ENCODE measurements at regions of chr19 and their contacts with region 1.

Region 1: GRCh38 chr19:1672038-1672768 is 19.8 kb upstream of the TCF3 start:
- DNase-seq: no peak
- H3K4me3 ChIP-seq: peak overlapping the region; percentile 36
- H3K27me3 ChIP-seq: peaks cover 24% of the 10 kb centered on the region
- CTCF ChIP-seq: peak; percentile 84

Region 2: DNA sequence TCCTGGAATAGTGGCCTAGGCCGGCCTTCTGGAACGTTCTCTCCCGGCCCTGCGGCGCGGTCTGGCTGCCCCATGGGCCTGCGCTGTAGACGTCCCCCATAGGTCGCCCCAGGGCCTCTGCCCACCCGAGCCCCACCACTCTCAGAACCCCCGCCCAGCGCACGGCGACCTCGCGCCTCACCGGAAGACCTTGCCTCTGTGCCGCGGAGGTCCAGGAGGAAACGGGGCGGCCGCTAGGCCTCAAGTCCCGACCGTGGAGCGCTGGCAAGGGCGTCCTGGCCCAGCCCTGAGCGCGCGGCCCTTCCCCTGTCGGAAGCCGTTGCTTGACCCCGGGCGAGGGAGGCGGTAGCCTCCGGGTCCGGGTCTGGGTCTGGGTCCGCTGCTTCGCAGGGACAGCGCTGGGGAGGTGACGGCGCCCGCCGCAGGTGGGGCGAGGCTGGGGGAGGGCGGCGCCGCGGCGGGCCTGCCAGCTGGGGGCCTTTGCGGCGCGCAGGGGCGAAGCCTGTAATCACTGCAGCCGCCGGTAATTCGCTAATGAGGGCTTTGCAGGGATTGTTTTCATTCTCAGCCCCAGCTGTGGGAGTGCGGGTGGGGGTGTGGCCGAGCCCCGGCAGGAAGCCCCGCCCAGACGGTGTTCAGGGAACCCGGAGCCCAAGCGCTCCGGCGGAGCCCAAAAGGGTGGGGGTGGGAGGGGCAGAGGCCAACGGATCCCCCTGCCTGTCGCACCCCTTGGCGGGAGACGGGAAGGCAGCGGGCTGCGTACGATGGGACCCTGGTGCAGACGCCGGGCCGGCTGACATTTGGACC is 201.8 kb before region 1 on chr19:
- CTCF ChIA-PET with region 1: no interaction called
- POLR2A ChIA-PET with region 1: no interaction called
- DNase-seq: no peak
- H3K4me3 ChIP-seq: peak overlapping the region; percentile 35
- H3K27me3 ChIP-seq: peaks cover 25% of the 10 kb centered on the region
- CTCF ChIP-seq: no peak

Region 3: GRCh38 chr19:1587873-1588272 is 84.3 kb before region 1 on chr19:
- CTCF ChIA-PET with region 1: interaction called, 10 read pairs
- POLR2A ChIA-PET with region 1: no interaction called
- DNase-seq: no peak
- H3K4me3 ChIP-seq: no peak overlapping the region
- H3K27me3 ChIP-seq: no peaks in the 10 kb centered on the region
- CTCF ChIP-seq: no peak

Region 4: DNA sequence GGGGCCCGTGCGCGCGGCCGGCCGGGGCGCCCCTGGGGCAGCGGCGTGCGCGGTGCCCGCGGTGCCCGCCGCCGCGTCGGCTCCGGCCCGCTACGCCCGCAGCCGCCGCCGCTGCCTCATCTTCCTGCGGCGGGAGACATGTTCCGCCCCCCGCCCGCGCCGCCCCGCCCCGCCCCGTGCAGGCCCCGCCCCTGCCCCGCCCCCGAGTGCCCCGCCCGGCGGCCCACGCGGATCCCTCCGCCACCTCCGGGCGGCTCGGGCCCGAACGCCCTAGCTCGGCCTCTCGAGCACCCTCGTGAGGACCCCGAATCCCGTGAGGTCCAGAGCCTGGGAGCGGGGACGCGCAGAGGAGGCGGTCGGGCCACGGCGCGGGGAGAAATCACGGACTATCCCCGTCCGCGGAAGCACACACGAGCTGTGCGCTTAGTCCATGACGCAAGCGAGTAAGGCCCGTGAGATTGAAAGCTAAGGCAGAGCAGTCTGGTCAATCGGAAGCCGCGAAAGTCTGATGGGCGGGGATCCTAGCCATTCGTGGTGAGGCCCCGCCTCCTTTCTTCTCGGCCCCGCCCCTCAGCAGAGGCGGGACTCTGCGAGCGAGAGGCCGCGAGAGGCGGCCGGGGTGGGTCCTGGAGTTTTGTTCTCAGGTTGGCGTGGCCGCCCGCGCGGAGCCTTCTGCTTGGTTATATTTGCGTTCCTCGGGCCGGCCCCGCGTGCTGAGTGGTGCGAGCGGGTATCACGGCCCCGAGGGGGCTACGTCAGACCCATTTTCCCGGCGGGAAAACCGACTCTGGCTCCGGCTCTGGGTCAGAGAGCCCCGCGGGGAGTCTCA is 19.5 kb before region 1 on chr19 and contains the start of gene TCF3:
- CTCF ChIA-PET with region 1: interaction called, 15 read pairs
- POLR2A ChIA-PET with region 1: no interaction called
- DNase-seq: peak; percentile 87
- H3K4me3 ChIP-seq: peak within 1 kb of the TSS; percentile 78
- H3K27me3 ChIP-seq: no peaks in the 10 kb centered on the region
- CTCF ChIP-seq: no peak
- polyA plus RNA-seq, gene TCF3: 32.6 and 49.8 TPM in 2 replicates

Region 5: DNA sequence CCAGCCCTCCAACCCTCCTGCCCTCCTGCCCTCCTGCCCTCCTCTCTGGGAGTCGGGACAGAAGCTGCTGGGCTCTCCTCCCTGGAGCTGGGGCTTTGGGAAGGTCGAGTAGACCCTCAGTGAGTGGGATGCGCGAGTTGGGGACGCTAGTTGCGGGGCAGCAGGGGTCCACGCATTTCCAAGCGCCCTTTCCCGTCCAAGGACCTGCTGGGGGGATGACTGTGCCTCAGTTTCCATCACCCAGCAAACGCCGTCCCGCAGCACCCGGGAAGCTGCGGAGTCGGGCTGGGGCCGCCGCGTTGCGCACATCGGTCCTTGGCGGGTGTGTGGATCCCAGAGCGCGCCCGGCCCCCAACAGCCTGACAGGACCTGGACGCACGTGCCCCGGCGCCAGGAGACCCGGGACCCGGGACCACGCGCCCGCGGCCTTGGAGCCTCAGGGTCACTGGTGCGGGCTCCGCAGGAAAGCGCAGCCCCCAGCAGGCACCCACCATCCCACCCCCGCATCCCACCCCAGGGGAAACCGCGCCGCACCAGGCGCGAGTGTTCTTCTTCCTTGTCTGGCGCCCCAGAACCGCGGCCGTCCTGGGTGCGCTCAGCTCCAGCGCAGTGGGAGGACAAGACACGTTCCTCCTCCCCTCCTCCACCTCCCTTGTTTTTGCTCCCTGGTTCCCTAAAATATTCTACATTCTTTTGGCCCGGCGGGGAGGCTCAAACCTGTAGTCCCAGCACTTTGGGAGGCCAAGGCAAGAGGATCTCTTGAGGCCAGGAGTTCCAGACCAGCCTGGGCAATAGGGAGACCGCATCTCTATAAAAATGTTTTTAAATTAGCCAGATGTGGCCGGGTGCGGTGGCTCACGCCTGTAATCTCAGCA is 90.3 kb after region 1 on chr19:
- CTCF ChIA-PET with region 1: interaction called, 87 read pairs
- POLR2A ChIA-PET with region 1: no interaction called
- DNase-seq: no peak
- H3K4me3 ChIP-seq: no peak overlapping the region
- H3K27me3 ChIP-seq: peaks cover 72% of the 10 kb centered on the region
- CTCF ChIP-seq: no peak

Region 6: GRCh38 chr19:1780272-1780958 is 108.2 kb after region 1 on chr19:
- CTCF ChIA-PET with region 1: interaction called, 11 read pairs
- POLR2A ChIA-PET with region 1: interaction called, 3 read pairs
- DNase-seq: no peak
- H3K4me3 ChIP-seq: no peak overlapping the region
- H3K27me3 ChIP-seq: peaks cover 28% of the 10 kb centered on the region
- CTCF ChIP-seq: peak; percentile 42; the same call in 1 of the 2 replicates

Region 7: DNA sequence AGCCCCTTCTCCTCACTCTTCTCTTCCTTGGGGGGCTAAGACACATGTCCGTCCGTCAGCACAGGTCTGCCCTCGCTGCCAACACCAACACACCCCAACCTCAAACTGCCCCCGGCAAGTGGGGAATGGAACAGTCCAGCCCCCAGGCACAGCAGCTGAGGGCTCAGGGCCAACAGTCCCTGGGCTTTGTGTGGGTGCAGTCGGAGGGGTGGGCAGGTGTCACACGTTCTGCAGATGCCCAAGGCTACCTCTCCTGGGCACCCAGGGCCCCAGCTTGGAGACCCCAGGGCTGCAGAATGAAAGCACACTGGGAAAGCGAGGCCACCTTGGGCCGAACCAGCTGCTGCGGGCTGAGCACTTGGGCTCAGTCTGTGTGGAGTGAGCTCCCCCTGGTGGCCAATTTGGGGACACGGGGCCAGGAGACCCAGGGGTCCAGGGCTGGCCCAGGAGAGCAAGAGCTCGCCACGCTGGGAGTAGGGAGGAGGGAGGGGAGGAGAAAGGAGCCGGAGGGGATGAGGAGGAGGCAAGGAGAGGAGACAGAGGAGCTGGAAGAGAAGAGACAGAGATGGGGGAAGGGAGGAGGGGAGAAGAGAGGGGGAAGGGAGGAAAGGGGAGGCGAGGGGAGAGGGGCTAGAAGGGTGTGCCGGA is 153.8 kb after region 1 on chr19:
- CTCF ChIA-PET with region 1: interaction called, 25 read pairs
- POLR2A ChIA-PET with region 1: no interaction called
- DNase-seq: no peak
- H3K4me3 ChIP-seq: no peak overlapping the region
- H3K27me3 ChIP-seq: no peaks in the 10 kb centered on the region
- CTCF ChIP-seq: peak; percentile 93